H1 (cell line): ENCODE measurements at regions of chr16 and their contacts with region 1.

Region 1: DNA sequence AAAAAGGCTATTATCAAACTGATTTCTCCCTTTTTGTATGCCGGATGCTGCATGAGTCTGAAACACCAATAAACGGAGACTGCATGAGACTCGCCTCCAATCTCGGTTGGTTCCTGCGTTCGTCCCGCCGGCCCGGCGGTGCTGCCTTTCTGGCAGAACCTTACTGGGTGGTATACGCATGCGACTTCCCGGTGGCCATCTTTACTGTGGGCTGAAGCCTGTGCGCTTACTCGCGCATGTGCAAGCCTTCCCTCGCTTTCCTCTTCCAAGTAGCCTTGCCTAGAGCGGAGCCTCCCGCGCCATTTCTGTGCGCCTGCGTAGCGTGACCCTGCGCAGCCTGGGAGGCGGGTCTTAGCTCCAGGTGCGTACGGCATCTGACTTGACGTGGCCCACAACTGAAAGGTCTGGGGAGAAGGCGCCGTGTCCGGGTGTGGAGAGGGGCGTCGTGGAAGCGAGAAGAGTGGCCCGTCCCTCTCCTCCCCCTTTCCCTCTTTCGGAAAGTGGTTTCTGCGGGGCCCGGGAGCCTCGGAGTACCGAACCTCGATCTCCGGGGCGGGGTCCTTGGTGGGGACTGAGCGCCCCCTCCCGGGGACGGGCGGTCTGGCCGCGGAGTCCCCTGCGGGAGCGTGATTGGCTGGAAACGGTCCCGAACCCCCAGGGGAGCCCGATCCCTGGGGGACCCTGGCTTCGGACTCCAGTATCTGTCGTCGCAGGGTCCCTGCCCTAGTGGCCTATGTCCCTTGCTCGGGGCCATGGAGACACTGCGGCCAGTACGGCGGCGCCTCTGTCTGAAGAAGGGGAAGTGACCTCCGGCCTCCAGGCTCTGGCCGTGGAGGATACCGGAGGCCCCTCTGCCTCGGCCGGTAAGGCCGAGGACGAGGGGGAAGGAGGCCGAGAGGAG is at the start of gene PAGR1:
- DNase-seq: peak; percentile 98
- H3K4me3 ChIP-seq: peak within 1 kb of the TSS; percentile 59 to 91 (median 83)
- H3K27ac ChIP-seq: peak within 1 kb of the TSS; percentile 94; the same call in 1 of the 2 replicates
- H3K4me1 ChIP-seq: peaks cover 0 to 36% (median 23%) of the 10 kb centered on the region in 4 experiments; a peak in 6 of 7 replicates
- H3K27me3 ChIP-seq: no peaks in the 10 kb centered on the region
- CTCF ChIP-seq: peak in 2 of 3 experiments; percentile 71 to 78; a peak in 3 of 4 replicates
- EP300 ChIP-seq: no peak
- POLR2A ChIP-seq: peak in 1 of 2 experiments; percentile 86; a peak in 2 of 3 replicates
- RAD21 ChIP-seq: peak; percentile 60 to 72
- total RNA-seq, gene PAGR1: 56.4 and 56.6 TPM in 2 replicates

Region 2: DNA sequence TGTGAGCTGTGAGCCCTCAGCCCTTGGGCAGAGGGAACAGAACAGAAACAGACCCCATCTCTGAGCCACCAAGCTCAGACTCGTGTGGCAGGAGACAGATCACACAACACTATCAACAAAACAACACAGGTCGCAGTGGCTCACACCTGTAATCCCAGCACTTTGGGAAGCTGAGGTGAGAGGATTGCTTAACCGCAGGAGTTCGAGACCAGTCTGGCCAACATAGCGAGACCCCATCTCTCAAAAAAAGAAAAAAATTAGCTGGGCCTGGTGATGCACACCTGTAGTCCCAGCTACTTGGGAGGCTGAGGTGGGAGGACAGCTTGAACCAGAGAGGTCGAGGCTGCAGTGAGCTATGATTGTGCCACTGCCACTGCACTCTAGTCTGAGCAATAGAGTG is 142.5 kb before region 1 on chr16:
- CTCF ChIA-PET with region 1: no interaction called
- POLR2A ChIA-PET with region 1: no interaction called
- DNase-seq: no peak
- H3K4me3 ChIP-seq: no peak overlapping the region
- H3K27ac ChIP-seq: no peak overlapping the region
- H3K4me1 ChIP-seq: peaks cover 0 to 8% (median 2%) of the 10 kb centered on the region in 4 experiments; a peak in 4 of 7 replicates
- H3K27me3 ChIP-seq: no peaks in the 10 kb centered on the region
- CTCF ChIP-seq: no peak
- EP300 ChIP-seq: no peak
- POLR2A ChIP-seq: no peak
- RAD21 ChIP-seq: no peak

Region 3: DNA sequence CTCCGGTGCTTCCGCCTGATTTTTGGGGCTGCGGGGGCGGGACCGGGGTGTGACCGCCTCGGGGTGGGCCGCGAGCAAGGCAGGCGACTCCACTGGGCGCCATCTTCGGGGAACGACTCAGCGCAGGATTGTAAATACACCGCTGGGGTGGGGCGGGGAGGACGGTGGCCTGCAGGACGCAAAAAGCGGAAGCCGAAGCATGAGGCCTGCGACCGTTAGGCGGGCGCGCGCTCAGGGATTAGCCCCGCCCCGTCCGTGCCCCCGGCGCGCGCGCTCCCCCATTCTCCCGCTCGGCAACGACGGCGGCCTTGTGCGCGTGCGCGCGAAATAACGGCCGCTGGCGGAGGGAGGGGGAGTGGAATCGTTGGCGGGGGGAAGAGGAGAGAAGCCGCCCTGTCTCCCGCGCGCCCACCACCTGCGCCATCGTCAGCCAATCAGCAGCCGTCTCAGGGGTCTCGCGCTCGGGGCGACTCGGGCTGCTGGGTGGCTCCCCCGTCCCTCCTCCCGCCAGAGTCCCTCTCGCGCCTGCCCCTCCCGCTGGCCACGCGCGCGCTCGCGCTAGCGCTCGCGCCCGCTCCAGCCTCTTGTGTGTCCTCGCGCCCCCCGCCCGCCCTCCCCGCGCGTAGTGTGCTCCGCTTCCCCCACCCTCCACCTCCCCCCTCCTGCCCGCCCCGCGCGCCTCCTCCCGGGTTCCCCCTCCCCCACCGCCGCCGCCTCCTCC is 10.5 kb before region 1 on chr16:
- CTCF ChIA-PET with region 1: interaction called, 30 read pairs
- POLR2A ChIA-PET with region 1: interaction called, 41 read pairs
- DNase-seq: peak; percentile 92 to 96
- H3K4me3 ChIP-seq: peak overlapping the region; percentile 54 to 79 (median 72)
- H3K27ac ChIP-seq: peak overlapping the region; percentile 86
- H3K4me1 ChIP-seq: peaks cover 0 to 35% (median 25%) of the 10 kb centered on the region in 4 experiments; a peak in 6 of 7 replicates
- H3K27me3 ChIP-seq: no peaks in the 10 kb centered on the region
- CTCF ChIP-seq: no peak
- EP300 ChIP-seq: 0 out of 3 replicates have a peak, but pooled peaks of 1 of the 2 experiments have one; percentile 6
- POLR2A ChIP-seq: peak in 1 of 2 experiments; percentile 76; a peak in 2 of 3 replicates
- RAD21 ChIP-seq: no peak; a peak in 1 of 4 replicates

Region 4: GRCh38 chr16:29836623-29837022 is 20.6 kb after region 1 on chr16:
- CTCF ChIA-PET with region 1: interaction called, 16 read pairs
- POLR2A ChIA-PET with region 1: interaction called, 167 read pairs
- DNase-seq: no peak
- H3K4me3 ChIP-seq: no peak overlapping the region
- H3K27ac ChIP-seq: no peak overlapping the region
- H3K4me1 ChIP-seq: peaks cover 0 to 2% (median 0%) of the 10 kb centered on the region in 4 experiments; a peak in 1 of 7 replicates
- H3K27me3 ChIP-seq: no peaks in the 10 kb centered on the region
- CTCF ChIP-seq: no peak
- EP300 ChIP-seq: no peak
- POLR2A ChIP-seq: no peak
- RAD21 ChIP-seq: no peak

Region 5: GRCh38 chr16:29842732-29843346 is 26.8 kb after region 1 on chr16:
- CTCF ChIA-PET with region 1: interaction called, 212 read pairs
- POLR2A ChIA-PET with region 1: interaction called, 167 read pairs
- DNase-seq: no peak
- H3K4me3 ChIP-seq: no peak overlapping the region
- H3K27ac ChIP-seq: no peak overlapping the region
- H3K4me1 ChIP-seq: no peaks in the 10 kb centered on the region; a peak in 1 of 7 replicates
- H3K27me3 ChIP-seq: no peaks in the 10 kb centered on the region
- CTCF ChIP-seq: peak in 1 of 3 experiments; percentile 19; a peak in 1 of 4 replicates
- EP300 ChIP-seq: no peak
- POLR2A ChIP-seq: no peak
- RAD21 ChIP-seq: no peak